Activated CD8-positive, alpha-beta memory T cell treated with anti-CD3 and anti-CD28 coated beads, Interleukin-2, amount 10 ng/mL, durations not matched to agents 7 days and 5 days (primary cell): ENCODE measurements at regions of chr6 and their contacts with region 1.

Region 1: DNA sequence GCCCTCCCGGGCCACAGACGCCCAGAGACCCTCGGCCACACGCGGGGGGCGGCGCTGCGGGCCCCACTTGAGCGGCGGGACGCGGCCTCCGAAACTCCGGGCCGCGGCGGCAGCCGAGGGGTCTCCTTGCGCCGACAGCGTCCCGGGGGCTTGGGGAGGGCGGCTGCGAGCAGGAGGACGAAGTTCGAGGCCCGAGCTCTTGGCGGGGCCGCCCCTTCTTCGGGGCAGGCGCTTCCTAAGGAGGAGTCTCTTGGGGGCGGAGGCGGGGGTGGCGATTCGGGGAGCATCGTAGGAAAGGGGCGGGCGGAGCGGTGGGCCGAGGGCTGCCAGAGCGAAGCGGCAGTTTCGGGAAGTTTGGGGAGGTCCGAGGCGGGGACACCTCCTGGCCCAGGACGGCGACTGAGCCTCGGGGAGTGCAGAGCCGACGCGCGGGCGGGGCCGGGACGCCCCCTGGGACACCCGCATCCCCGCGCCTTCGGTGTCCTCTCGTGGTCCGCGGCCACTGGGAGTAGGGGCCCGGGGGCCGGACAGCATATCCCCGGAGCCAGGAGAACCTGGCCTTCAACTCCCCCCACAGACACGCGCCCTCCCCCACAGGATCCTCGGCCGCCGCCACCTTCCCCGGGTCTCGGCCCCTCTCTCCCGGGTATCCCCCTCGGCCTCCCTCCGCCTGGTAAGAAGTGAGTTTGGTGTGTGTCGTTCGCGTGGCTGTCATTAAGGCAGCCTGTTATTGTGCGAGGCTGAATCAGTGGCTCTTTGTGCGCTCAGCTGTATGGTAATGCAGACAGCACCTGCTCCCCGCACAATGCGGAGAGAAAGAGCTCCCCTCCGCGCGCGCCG is 613 bp upstream of the DLL1 start:
- DNase-seq: no peak
- ATAC-seq: peak; percentile 37
- H3K4me3 Mint-ChIP-seq: peak overlapping the region; percentile 62
- H3K27ac Mint-ChIP-seq: no peak overlapping the region
- H3K4me1 Mint-ChIP-seq: peaks cover 32% of the 10 kb centered on the region
- H3K27me3 Mint-ChIP-seq: peaks cover 76% of the 10 kb centered on the region

Region 2: GRCh38 chr6:169950558-169950957 is 340.9 kb before region 1 on chr6:
- CTCF ChIA-PET with region 1: interaction called, 12 read pairs
- DNase-seq: peak; percentile 55
- ATAC-seq: no peak
- H3K4me3 Mint-ChIP-seq: no peak overlapping the region
- H3K27ac Mint-ChIP-seq: no peak overlapping the region
- H3K4me1 Mint-ChIP-seq: peaks cover 11% of the 10 kb centered on the region
- H3K27me3 Mint-ChIP-seq: peaks cover 44% of the 10 kb centered on the region

Region 3: DNA sequence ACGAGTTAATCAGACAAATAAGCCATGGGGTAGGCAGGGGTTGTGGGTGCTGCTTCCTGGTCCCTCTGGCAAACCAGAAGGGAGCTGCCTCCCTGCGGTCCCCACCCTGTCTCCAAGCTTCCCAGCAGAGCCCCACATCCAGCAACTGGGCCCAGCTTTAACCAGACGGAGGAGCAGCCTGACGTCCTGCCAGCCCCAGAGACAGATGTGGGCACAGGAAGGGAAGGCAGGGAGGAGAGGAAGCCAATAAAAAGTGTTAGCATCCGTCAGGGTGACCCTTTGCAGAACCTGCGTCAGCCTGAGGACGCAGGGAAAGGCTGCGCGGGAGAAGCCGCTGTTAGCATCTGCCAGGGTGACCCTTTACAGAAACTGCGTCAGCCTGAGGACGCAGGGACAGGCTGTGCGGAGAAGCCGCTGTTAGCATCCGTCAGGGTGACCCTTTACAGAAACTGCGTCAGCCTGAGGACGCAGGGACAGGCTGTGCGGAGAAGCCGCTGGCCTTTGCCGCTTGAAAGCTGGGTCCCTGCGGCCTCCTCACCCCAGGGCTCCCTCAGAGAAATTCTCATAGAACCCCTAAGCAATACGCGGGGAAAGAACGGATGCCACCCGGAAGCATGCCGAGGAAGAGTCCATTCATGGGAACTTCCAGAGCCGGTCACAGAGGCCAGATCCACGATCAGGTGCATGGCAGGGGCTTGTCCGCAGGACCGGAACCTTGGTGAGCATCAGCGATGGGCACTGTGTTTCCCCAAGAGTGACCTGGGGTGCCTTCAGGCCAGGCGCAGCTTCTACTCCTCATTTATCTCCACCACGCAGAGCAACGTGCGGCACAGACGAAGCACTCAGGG is 16.6 kb before region 1 on chr6:
- CTCF ChIA-PET with region 1: no interaction called
- DNase-seq: no peak
- ATAC-seq: no peak
- H3K4me3 Mint-ChIP-seq: no peak overlapping the region
- H3K27ac Mint-ChIP-seq: no peak overlapping the region
- H3K4me1 Mint-ChIP-seq: peaks cover 26% of the 10 kb centered on the region
- H3K27me3 Mint-ChIP-seq: peaks cover 87% of the 10 kb centered on the region

Region 4: DNA sequence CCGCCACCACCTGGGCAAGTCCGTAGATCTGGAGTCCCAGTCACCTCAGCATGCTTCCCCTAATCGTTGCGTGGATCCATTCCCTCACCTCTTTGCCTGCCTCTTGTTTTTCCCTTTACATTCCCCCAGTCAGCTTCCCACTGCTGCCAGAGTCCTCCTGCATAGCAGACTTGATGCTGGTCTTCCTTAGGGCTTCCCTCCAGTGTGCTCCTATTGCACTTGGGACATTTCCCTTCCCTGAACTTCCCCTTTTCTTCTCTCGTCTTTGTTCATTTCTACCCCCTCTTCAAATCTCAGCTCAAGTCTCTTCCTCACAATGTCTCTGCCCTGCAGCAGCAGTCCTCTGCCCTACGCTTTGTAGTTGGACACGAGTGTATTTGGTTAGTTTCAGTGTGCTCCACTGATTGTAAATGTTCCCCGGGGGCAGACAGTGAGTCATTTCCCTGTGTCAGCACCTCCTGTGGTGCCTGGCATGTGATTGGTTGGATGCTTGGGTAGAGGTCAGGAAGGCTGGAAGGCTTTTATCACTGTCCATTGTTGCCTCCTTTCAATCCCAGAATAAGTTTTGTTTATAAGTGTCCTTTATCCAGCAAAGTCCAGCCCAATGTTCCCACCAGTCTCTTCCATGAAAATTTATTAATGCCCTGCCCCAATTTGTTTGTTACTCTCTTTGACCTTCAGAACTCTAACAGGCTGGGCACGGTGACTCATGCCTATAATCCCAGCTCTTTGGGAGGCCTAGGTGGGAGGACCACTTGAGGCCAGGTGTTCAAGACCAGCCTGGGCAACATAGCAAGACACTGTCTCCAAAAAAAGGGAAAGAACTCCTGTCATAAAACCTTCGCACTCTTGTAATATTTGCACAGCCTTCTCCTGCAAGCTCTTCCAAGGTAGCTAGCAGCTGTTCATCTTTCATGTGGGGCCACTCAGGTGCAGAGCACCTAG is 53.4 kb after region 1 on chr6:
- CTCF ChIA-PET with region 1: no interaction called
- DNase-seq: peak; percentile 55
- ATAC-seq: peak; percentile 52
- H3K4me3 Mint-ChIP-seq: no peak overlapping the region
- H3K27ac Mint-ChIP-seq: peak overlapping the region; percentile 78
- H3K4me1 Mint-ChIP-seq: peaks cover 40% of the 10 kb centered on the region
- H3K27me3 Mint-ChIP-seq: no peaks in the 10 kb centered on the region